GM12878 (cell line): ENCODE measurements at regions of chr15 and their contacts with region 1.

Region 1: DNA sequence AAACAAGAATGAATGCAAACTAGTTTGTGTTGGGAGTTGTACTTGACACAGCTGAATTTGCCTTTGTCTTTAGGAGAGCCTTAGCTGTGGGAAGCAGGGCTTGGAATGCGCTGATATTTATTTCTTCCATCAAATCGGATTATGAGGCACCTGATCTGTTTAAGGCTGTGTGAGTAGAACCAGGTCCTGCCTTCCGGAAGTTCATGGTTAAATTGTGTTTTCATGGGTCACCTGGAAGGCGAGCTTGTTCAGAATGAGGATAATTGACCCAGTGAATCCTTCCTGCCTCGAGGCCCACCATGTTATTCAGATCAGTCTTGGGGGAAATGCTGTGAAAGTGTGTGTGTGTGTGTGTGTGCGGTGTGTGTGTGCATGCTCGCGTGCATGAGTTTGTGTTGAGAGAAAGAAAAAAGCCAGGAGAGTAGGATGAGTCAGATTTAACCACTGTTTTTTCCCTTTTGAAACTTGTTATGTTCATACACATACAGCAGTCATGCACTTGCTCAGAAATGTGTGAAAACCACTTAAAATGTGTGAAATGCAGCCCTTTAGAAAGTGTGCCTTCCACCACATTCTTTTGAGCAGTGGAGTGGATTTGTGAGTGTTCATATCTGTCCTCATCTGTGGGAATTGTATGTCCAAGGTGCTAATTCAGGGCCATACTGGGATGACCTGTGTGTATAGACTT is 36.7 kb downstream of the SMAD3 start:
- DNase-seq: peak; percentile 97
- ATAC-seq: peak; percentile 70
- H3K4me3 ChIP-seq: peak overlapping the region; percentile 0; the same call in 1 of the 2 replicates
- H3K27ac ChIP-seq: peak overlapping the region; percentile 98
- H3K4me1 ChIP-seq: peaks cover 76% of the 10 kb centered on the region
- H3K27me3 ChIP-seq: no peaks in the 10 kb centered on the region
- CTCF ChIP-seq: no peak
- EP300 ChIP-seq: peak; percentile 99 to 100
- POLR2A ChIP-seq: no peak
- RAD21 ChIP-seq: peak; percentile 30

Region 2: DNA sequence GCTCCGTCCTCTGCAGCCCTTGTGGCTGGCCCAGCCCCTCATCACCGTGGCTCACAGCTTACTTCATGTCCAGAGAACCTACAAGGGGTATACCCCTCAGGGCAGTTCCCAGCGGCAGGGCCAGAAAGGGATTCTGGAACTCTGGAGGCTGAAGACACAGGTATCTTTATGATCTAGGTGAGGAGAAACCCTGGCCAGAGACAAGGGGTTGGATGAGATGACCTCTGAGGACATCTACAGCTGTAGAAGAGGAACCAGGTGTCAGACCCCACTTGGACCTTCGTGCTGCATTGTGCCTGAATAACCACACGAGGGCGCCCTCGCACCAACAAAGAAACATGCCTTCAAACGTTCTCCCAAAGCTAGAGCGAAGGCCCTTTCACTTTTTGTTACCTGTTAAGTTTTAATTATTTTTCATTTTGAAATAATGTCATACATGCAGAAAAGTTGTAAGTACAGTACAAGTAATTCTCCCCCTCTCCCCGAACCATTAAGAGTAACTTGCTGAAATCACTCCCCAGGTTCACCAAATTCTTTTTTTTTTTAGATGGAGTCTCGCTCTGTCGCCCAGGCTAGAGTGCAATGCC is 155.4 kb before region 1 on chr15:
- CTCF ChIA-PET with region 1: interaction called, 8 read pairs
- POLR2A ChIA-PET with region 1: no interaction called
- RAD21 ChIA-PET with region 1: interaction called, 7 read pairs
- SMC1A ChIA-PET with region 1: interaction called, 12 read pairs
- in situ Hi-C with region 1: no loop called
- intact Hi-C with region 1: no loop called
- DNase-seq: peak; percentile 39
- ATAC-seq: peak; percentile 87
- H3K4me3 ChIP-seq: no peak overlapping the region
- H3K27ac ChIP-seq: no peak overlapping the region
- H3K4me1 ChIP-seq: peaks cover 6% of the 10 kb centered on the region
- H3K27me3 ChIP-seq: no peaks in the 10 kb centered on the region; a peak in 1 of 4 replicates
- CTCF ChIP-seq: peak; percentile 85 to 97 (median 95)
- EP300 ChIP-seq: no peak
- POLR2A ChIP-seq: no peak
- RAD21 ChIP-seq: peak; percentile 98

Region 3: GRCh38 chr15:67065444-67066093 is 36.5 kb before region 1 on chr15 and contains the start of gene SMAD3:
- CTCF ChIA-PET with region 1: interaction called, 6 read pairs
- POLR2A ChIA-PET with region 1: interaction called, 8 read pairs
- RAD21 ChIA-PET with region 1: interaction called, 40 read pairs
- SMC1A ChIA-PET with region 1: interaction called, 67 read pairs
- in situ Hi-C with region 1: no loop called
- intact Hi-C with region 1: loop called (anchors 2 kb)
- DNase-seq: no peak
- ATAC-seq: peak; percentile 72
- H3K4me3 ChIP-seq: peak within 1 kb of the TSS; percentile 80
- H3K27ac ChIP-seq: peak within 1 kb of the TSS; percentile 78
- H3K4me1 ChIP-seq: peaks cover 25% of the 10 kb centered on the region
- H3K27me3 ChIP-seq: no peaks in the 10 kb centered on the region
- CTCF ChIP-seq: no peak
- EP300 ChIP-seq: no peak
- POLR2A ChIP-seq: peak; percentile 93
- RAD21 ChIP-seq: no peak
- polyA plus RNA-seq, gene SMAD3: 5.6 to 6.6 TPM

Region 4: GRCh38 chr15:67085818-67086636 is 16.0 kb before region 1 on chr15:
- CTCF ChIA-PET with region 1: interaction called, 71 read pairs
- POLR2A ChIA-PET with region 1: interaction called, 79 read pairs
- RAD21 ChIA-PET with region 1: interaction called, 194 read pairs
- SMC1A ChIA-PET with region 1: interaction called, 247 read pairs
- in situ Hi-C with region 1: no loop called
- intact Hi-C with region 1: loop called (anchors 1 kb)
- DNase-seq: peak; percentile 97
- ATAC-seq: peak; percentile 66
- H3K4me3 ChIP-seq: peak overlapping the region; percentile 54
- H3K27ac ChIP-seq: peak overlapping the region; percentile 86
- H3K4me1 ChIP-seq: peaks cover 84% of the 10 kb centered on the region
- H3K27me3 ChIP-seq: no peaks in the 10 kb centered on the region
- CTCF ChIP-seq: no peak
- EP300 ChIP-seq: peak; percentile 95 to 96
- POLR2A ChIP-seq: no peak
- RAD21 ChIP-seq: peak; percentile 26; the same call in 1 of the 2 replicates

Region 5: GRCh38 chr15:67091071-67091979 is 10.7 kb before region 1 on chr15:
- CTCF ChIA-PET with region 1: interaction called, 71 read pairs
- POLR2A ChIA-PET with region 1: interaction called, 79 read pairs
- RAD21 ChIA-PET with region 1: interaction called, 194 read pairs
- SMC1A ChIA-PET with region 1: interaction called, 247 read pairs
- in situ Hi-C with region 1: no loop called
- intact Hi-C with region 1: loop called (anchors 1 kb)
- DNase-seq: peak; percentile 80
- ATAC-seq: peak; percentile 86
- H3K4me3 ChIP-seq: peak overlapping the region; percentile 33; the same call in 1 of the 2 replicates
- H3K27ac ChIP-seq: peak overlapping the region; percentile 57
- H3K4me1 ChIP-seq: peaks cover 82% of the 10 kb centered on the region
- H3K27me3 ChIP-seq: no peaks in the 10 kb centered on the region
- CTCF ChIP-seq: no peak
- EP300 ChIP-seq: peak; percentile 85 to 98
- POLR2A ChIP-seq: peak; percentile 41; the same call in 1 of the 2 replicates
- RAD21 ChIP-seq: no peak; the same call in 1 of the 2 replicates

Region 6: GRCh38 chr15:67120839-67121643 is 19.0 kb after region 1 on chr15:
- CTCF ChIA-PET with region 1: interaction called, 3 read pairs
- POLR2A ChIA-PET with region 1: interaction called, 16 read pairs
- RAD21 ChIA-PET with region 1: interaction called, 57 read pairs
- SMC1A ChIA-PET with region 1: interaction called, 77 read pairs
- in situ Hi-C with region 1: no loop called
- intact Hi-C with region 1: no loop called
- DNase-seq: peak; percentile 51
- ATAC-seq: peak; percentile 92
- H3K4me3 ChIP-seq: no peak overlapping the region
- H3K27ac ChIP-seq: peak overlapping the region; percentile 58
- H3K4me1 ChIP-seq: peaks cover 49% of the 10 kb centered on the region
- H3K27me3 ChIP-seq: no peaks in the 10 kb centered on the region
- CTCF ChIP-seq: no peak
- EP300 ChIP-seq: peak; percentile 85 to 86; a peak in 2 of 4 replicates
- POLR2A ChIP-seq: peak; percentile 77
- RAD21 ChIP-seq: no peak

Region 7: DNA sequence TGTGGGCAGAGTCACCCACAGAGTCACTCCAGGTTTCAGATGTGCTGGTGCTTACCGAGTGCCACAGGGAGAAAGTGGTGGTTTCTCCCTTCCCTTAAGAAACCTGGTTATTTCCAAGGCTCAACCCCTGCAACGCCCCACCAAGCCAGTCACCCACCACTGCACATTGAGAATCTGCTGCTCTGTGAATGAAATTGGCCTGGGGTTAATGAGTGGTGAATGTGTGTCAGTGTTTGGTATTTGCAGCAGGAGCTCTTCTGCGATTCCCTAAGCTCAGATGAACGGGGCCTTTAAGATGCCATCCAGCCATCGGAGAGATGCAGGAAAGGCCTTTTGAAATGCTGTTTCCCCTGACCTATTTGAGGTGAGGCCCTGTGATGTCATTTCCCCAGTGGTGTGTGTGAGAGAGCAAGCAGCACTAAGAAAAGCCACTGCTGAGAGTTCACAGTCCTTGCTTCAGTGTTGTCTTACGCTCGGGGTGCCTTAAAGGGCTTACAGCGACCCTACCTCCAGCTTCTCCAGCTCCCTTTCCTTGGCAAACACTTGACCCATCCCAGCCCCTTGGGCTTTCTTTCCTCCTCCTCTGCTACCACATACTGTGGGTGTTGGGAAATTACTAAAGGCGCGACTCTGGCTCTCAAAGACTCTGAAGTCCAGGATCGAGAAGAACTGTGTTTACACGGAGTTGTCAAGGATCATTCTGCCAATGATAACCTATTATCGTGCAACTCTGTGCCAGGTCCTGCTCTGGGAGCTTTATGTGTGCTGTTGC is 32.2 kb after region 1 on chr15:
- CTCF ChIA-PET with region 1: interaction called, 5 read pairs
- POLR2A ChIA-PET with region 1: interaction called, 13 read pairs
- RAD21 ChIA-PET with region 1: interaction called, 16 read pairs
- SMC1A ChIA-PET with region 1: interaction called, 58 read pairs
- in situ Hi-C with region 1: no loop called
- intact Hi-C with region 1: loop called (anchors 1 kb)
- DNase-seq: no peak
- ATAC-seq: peak; percentile 89
- H3K4me3 ChIP-seq: peak overlapping the region; percentile 51
- H3K27ac ChIP-seq: peak overlapping the region; percentile 89
- H3K4me1 ChIP-seq: peaks cover 67% of the 10 kb centered on the region
- H3K27me3 ChIP-seq: no peaks in the 10 kb centered on the region
- CTCF ChIP-seq: no peak
- EP300 ChIP-seq: no peak
- POLR2A ChIP-seq: peak; percentile 71
- RAD21 ChIP-seq: no peak